Activated naive CD4-positive, alpha-beta T cell treated with anti-CD3 and anti-CD28 coated beads, Interleukin-2, amount 10 ng/mL, durations not matched to agents 7 days and 5 days (primary cell): ENCODE measurements at regions of chr19 and their contacts with region 1.

Region 1: GRCh38 chr19:18419195-18419698 is at the start of gene SSBP4:
- DNase-seq: peak; percentile 77
- H3K4me3 Mint-ChIP-seq: peak within 1 kb of the TSS; percentile 95
- H3K27ac Mint-ChIP-seq: peak within 1 kb of the TSS; percentile 91
- H3K4me1 Mint-ChIP-seq: peaks cover 85% of the 10 kb centered on the region
- H3K27me3 Mint-ChIP-seq: peaks cover 41% of the 10 kb centered on the region

Region 2: DNA sequence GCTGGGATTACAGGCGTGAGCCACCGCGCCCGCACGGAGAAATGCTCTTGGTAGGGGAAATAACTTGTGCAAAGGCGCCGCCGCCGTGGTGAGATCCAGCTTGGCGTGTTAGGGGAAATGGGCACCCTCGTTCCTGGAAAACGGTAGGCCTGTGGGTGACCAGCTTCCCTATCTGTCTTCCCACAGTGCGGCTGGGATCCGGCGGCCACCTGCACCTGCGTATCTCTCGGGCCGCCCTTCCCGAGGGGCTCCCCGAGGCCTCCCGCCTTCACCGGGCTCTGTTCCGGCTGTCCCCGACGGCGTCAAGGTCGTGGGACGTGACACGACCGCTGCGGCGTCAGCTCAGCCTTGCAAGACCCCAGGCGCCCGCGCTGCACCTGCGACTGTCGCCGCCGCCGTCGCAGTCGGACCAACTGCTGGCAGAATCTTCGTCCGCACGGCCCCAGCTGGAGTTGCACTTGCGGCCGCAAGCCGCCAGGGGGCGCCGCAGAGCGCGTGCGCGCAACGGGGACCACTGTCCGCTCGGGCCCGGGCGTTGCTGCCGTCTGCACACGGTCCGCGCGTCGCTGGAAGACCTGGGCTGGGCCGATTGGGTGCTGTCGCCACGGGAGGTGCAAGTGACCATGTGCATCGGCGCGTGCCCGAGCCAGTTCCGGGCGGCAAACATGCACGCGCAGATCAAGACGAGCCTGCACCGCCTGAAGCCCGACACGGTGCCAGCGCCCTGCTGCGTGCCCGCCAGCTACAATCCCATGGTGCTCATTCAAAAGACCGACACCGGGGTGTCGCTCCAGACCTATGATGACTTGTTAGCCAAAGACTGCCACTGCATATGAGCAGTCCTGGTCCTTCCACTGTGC is 30.9 kb before region 1 on chr19:
- CTCF ChIA-PET with region 1: interaction called, 96 read pairs
- DNase-seq: peak; percentile 83
- H3K4me3 Mint-ChIP-seq: peak overlapping the region; percentile 55
- H3K27ac Mint-ChIP-seq: no peak overlapping the region
- H3K4me1 Mint-ChIP-seq: peaks cover 25% of the 10 kb centered on the region
- H3K27me3 Mint-ChIP-seq: peaks cover 100% of the 10 kb centered on the region